ENCODE measurements at regions of chr6 and their contacts with region 1.

Region 1: DNA sequence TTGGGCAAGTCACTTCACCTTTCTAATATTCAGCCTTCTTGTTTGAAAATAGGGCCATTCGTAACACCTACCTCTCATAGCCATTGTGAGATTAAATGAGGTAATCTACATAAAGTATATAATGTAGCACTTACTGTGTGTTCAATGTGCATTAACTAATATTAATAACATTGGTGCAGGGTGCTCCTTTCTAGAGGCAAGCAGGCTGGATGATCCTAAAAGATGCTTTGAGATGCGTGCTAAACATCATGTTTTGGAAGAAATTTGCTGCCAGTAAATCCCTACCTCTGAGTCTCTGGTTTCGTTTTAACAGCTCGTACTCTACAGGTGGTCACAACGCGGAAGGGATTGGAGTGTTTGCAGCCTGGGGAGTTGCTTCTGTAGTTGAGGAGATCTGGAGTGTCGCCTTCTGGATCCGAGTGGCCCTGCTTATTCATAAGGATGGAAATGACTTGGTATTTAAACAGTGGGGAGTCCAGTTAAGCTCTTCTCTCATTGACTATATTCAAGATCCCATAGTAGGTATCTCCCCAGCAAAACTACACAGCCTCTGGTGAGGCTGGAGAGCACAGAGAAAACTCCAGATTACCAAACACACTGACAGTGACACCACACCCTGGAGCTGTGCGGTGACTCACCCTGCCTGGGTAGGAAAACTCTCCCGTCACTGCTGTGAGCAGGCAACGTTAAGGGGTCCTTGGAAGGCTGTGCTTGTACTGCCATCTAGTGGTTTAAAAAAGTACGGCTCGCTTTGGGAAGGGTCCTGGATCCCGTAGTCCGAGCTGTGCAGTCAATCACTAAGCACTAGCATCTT is 107.9 kb downstream of the MAP3K7 start:
- DNase-seq: peak; percentile 54
- ATAC-seq: peak; percentile 96
- H3K4me3 Mint-ChIP-seq: no peak overlapping the region
- H3K27ac Mint-ChIP-seq: peak overlapping the region; percentile 64
- H3K4me1 Mint-ChIP-seq: peaks cover 22% of the 10 kb centered on the region
- H3K27me3 Mint-ChIP-seq: no peaks in the 10 kb centered on the region
- CTCF ChIP-seq: peak; percentile 95

Region 2: DNA sequence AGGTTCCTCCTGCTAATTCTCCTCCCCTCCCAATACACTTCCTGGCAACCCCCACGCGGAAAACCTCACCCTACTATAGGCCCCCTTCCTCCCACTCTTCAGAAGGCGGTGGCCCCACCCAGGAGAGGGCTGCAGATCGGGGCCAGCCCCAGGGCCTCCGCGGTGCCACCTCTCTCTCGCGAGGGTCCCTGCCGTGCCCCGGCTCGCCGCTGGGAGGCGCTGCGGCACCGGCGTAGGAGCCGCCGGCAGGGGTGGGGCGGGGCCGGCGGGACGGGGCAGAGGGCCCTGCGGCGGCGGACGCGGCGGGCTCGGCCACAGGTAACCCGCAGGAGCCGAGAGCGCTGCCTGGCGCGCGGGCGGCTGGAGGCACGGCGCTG is 1046.1 kb before region 1 on chr6 and contains the start of gene ANKRD6:
- CTCF ChIA-PET with region 1: no interaction called
- POLR2A ChIA-PET with region 1: no interaction called
- intact Hi-C with region 1: loop called (anchors 2 kb)
- DNase-seq: peak; percentile 95
- ATAC-seq: peak; percentile 97
- H3K4me3 Mint-ChIP-seq: peak within 1 kb of the TSS; percentile 86
- H3K27ac Mint-ChIP-seq: peak within 1 kb of the TSS; percentile 41
- H3K4me1 Mint-ChIP-seq: peaks cover 11% of the 10 kb centered on the region
- H3K27me3 Mint-ChIP-seq: peaks cover 4% of the 10 kb centered on the region
- CTCF ChIP-seq: no peak
- total RNA-seq, gene ANKRD6: 6.6 and 9.6 TPM in 2 replicates

Region 3: DNA sequence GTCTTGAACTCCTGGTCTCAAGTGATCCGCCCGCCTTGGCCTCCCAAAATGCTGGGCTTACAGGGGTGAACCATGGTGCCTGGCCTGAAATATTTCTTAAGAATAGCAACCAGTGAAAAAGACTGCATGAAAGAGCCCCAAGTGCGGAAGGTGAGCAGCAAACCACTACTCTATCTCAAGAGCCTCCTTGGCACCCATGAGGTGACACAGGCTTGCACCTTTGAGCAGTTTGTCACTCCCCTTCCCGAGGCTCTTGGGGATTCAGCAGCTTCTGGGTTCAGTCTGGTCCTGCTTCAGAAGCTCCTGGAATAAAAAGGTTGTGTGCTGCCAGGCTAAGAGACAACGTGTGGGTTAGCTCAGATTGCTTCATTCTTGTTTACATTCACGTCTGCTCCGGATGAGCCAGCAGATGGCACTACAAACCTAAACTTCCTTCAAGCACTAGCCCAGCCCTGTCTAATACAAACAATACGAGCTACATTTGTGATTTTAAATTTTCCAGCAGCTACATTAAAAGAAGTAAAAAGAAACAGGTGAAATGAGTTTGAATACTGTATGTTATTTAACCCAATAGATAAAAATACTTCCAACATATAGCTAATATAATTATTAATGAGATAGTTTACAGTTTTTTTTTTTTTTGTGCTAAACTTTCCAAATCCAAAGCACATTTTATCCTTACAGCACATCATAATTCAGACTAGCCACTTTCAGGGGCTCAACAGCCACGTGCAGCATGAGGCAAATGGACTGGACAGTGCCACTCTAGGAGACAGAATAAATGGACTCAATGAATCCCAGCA is 538.6 kb before region 1 on chr6:
- CTCF ChIA-PET with region 1: interaction called, 260 read pairs
- POLR2A ChIA-PET with region 1: interaction called, 10 read pairs
- intact Hi-C with region 1: loop called (anchors 1 kb)
- DNase-seq: no peak
- ATAC-seq: peak; percentile 89
- H3K4me3 Mint-ChIP-seq: no peak overlapping the region
- H3K27ac Mint-ChIP-seq: peak overlapping the region; percentile 59
- H3K4me1 Mint-ChIP-seq: peaks cover 13% of the 10 kb centered on the region
- H3K27me3 Mint-ChIP-seq: no peaks in the 10 kb centered on the region
- CTCF ChIP-seq: peak; percentile 58

Region 4: GRCh38 chr6:89970609-89971337 is 508.2 kb before region 1 on chr6:
- CTCF ChIA-PET with region 1: interaction called, 20 read pairs
- POLR2A ChIA-PET with region 1: no interaction called
- intact Hi-C with region 1: loop called (anchors 1 kb)
- DNase-seq: no peak
- ATAC-seq: peak; percentile 61
- H3K4me3 Mint-ChIP-seq: no peak overlapping the region
- H3K27ac Mint-ChIP-seq: no peak overlapping the region
- H3K4me1 Mint-ChIP-seq: peaks cover 12% of the 10 kb centered on the region
- H3K27me3 Mint-ChIP-seq: no peaks in the 10 kb centered on the region
- CTCF ChIP-seq: no peak

Region 5: DNA sequence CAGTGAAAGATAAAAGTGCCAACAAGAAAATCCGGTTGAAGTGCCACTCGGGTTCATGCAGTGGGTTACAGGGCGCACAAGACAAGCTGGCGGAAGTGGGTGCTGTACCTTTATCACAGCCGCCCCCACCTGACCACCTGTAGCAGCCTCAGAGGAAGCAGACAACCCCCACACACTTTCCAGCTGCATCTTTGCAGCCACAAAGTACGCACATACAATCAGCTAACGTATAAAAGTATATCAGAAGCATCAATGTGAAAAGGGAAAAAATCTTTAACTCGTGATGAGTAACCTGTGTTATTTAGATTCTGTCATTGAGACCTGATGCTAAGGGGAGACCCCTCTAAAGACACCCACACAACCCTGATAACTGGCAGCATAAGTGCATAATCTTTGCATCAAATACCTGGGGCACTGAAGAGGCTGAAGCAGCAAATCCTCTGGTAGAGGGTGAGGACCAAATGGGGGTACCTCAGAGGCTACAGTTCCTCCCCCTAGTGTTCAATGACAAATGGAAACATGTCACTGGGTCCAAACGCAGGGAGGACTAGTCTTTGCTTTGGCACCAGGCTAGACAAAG is 204.5 kb before region 1 on chr6:
- CTCF ChIA-PET with region 1: interaction called, 5 read pairs
- POLR2A ChIA-PET with region 1: no interaction called
- intact Hi-C with region 1: loop called (anchors 5 kb)
- DNase-seq: peak; percentile 43
- ATAC-seq: peak; percentile 84
- H3K4me3 Mint-ChIP-seq: peak overlapping the region; percentile 64
- H3K27ac Mint-ChIP-seq: peak overlapping the region; percentile 85
- H3K4me1 Mint-ChIP-seq: peaks cover 93% of the 10 kb centered on the region
- H3K27me3 Mint-ChIP-seq: no peaks in the 10 kb centered on the region
- CTCF ChIP-seq: no peak

Region 6: GRCh38 chr6:90413867-90414266 is 65.1 kb before region 1 on chr6:
- CTCF ChIA-PET with region 1: interaction called, 5 read pairs
- POLR2A ChIA-PET with region 1: interaction called, 3 read pairs
- intact Hi-C with region 1: loop called (anchors 5 kb)
- DNase-seq: no peak
- ATAC-seq: peak; percentile 64
- H3K4me3 Mint-ChIP-seq: peak overlapping the region; percentile 70
- H3K27ac Mint-ChIP-seq: peak overlapping the region; percentile 84
- H3K4me1 Mint-ChIP-seq: peaks cover 32% of the 10 kb centered on the region
- H3K27me3 Mint-ChIP-seq: no peaks in the 10 kb centered on the region
- CTCF ChIP-seq: no peak

Region 7: DNA sequence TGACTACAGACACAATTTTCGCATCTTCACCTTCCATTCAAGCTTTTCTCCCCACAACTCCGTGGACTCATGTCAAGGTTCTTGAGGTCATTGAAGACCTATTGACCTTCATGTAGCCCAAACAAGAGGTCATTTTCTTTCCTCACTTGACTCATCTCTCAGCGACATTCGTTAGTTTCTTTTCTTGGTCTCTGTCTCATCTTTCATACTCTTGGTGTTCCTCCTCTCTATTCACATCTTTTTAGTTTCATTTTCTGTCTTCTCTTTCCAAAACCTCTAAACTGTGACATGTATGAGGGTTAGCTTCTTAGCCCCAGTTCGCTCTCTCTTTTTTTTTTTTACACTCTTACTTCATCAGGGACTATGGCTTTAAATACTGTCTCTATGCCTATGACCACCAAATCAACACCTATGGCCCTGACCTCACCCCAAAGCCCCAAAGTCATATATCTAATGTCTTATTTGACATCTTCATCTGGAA is 53.8 kb before region 1 on chr6:
- CTCF ChIA-PET with region 1: interaction called, 4 read pairs
- POLR2A ChIA-PET with region 1: no interaction called
- intact Hi-C with region 1: loop called (anchors 5 kb)
- DNase-seq: no peak
- ATAC-seq: peak; percentile 90
- H3K4me3 Mint-ChIP-seq: peak overlapping the region; percentile 71
- H3K27ac Mint-ChIP-seq: peak overlapping the region; percentile 62
- H3K4me1 Mint-ChIP-seq: peaks cover 19% of the 10 kb centered on the region
- H3K27me3 Mint-ChIP-seq: no peaks in the 10 kb centered on the region
- CTCF ChIP-seq: no peak